CD14-positive monocyte (primary cell): ENCODE measurements at regions of chr19 and their contacts with region 1.

Region 1: GRCh38 chr19:10332955-10333757 is at the start of gene RAVER1:
- DNase-seq: peak; percentile 97 to 98 (median 98)
- H3K4me3 ChIP-seq: peak within 1 kb of the TSS; percentile 76 to 96 (median 87)
- H3K4me3 Mint-ChIP-seq: peak within 1 kb of the TSS; percentile 94
- H3K27ac ChIP-seq: peak within 1 kb of the TSS; percentile 74 to 85
- H3K27ac Mint-ChIP-seq: peak within 1 kb of the TSS; percentile 93 to 98 (median 96)
- H3K4me1 ChIP-seq: peaks cover 31 to 46% of the 10 kb centered on the region in 2 donors
- H3K4me1 Mint-ChIP-seq: peaks cover 33% of the 10 kb centered on the region
- H3K27me3 ChIP-seq: no peaks in the 10 kb centered on the region
- H3K27me3 Mint-ChIP-seq: no peaks in the 10 kb centered on the region
- CTCF ChIP-seq: no peak
- polyA plus RNA-seq, gene RAVER1: 6.0 to 20.7 (median 9.0) TPM

Region 2: GRCh38 chr19:10269333-10270179 is 63.6 kb before region 1 on chr19:
- intact Hi-C with region 1: loop called (anchors 5 kb)
- DNase-seq: peak; percentile 84 to 97 (median 85)
- H3K4me3 ChIP-seq: peak overlapping the region; percentile 75 to 96 (median 76)
- H3K4me3 Mint-ChIP-seq: peak overlapping the region; percentile 88 to 93
- H3K27ac ChIP-seq: peak overlapping the region; percentile 95 to 96
- H3K27ac Mint-ChIP-seq: peak overlapping the region; percentile 97 to 99 (median 98)
- H3K4me1 ChIP-seq: peaks cover 42 to 51% of the 10 kb centered on the region in 2 donors
- H3K4me1 Mint-ChIP-seq: peaks cover 38% of the 10 kb centered on the region
- H3K27me3 ChIP-seq: no peaks in the 10 kb centered on the region
- H3K27me3 Mint-ChIP-seq: peaks cover 2 to 4% (median 3%) of the 10 kb centered on the region in 3 donors
- CTCF ChIP-seq: peak; percentile 98

Region 3: GRCh38 chr19:10346509-10346908 is 13.4 kb after region 1 on chr19:
- intact Hi-C with region 1: loop called in 1 of 2 experiments (anchors 2 kb)
- DNase-seq: peak; percentile 87 to 92 (median 91)
- H3K4me3 ChIP-seq: peak overlapping the region in 1 of 3 experiments; percentile 48
- H3K4me3 Mint-ChIP-seq: peak overlapping the region; percentile 53 to 67
- H3K27ac ChIP-seq: peak overlapping the region; percentile 93 to 96
- H3K27ac Mint-ChIP-seq: peak overlapping the region; percentile 97 to 99 (median 99)
- H3K4me1 ChIP-seq: peaks cover 28 to 32% of the 10 kb centered on the region in 2 donors
- H3K4me1 Mint-ChIP-seq: peaks cover 23% of the 10 kb centered on the region
- H3K27me3 ChIP-seq: no peaks in the 10 kb centered on the region
- H3K27me3 Mint-ChIP-seq: peaks cover 0 to 2% (median 1%) of the 10 kb centered on the region in 3 donors
- CTCF ChIP-seq: no peak

Region 4: DNA sequence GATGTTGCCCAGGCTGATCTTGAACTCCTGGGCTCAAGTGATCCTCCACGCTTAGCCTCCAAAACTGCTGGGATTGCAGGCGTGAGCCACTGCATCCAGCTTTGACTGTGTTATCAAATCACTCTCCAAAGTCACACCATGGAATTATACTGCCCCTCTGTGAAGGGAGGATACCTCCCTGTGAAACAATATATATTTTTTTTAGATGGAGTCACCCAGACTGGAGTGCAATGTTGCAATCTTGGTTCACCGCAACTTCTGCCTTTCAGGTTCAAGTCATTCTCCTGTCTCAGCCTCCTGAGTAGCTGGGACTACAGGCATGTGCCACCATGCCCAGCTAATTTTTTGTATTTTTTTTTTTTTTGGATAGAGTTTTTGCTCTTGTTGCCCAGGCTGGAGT is 39.5 kb after region 1 on chr19:
- intact Hi-C with region 1: loop called (anchors 5 kb)
- DNase-seq: peak; percentile 87 to 93 (median 92)
- H3K4me3 ChIP-seq: peak overlapping the region in 1 of 3 experiments; percentile 29
- H3K4me3 Mint-ChIP-seq: peak overlapping the region; percentile 39 to 65
- H3K27ac ChIP-seq: peak overlapping the region; percentile 85 to 88
- H3K27ac Mint-ChIP-seq: peak overlapping the region; percentile 96 to 99 (median 97)
- H3K4me1 ChIP-seq: peaks cover 33 to 39% of the 10 kb centered on the region in 2 donors
- H3K4me1 Mint-ChIP-seq: peaks cover 35% of the 10 kb centered on the region
- H3K27me3 ChIP-seq: no peaks in the 10 kb centered on the region
- H3K27me3 Mint-ChIP-seq: no peaks in the 10 kb centered on the region
- CTCF ChIP-seq: no peak

Region 5: GRCh38 chr19:10388957-10389356 is 55.8 kb after region 1 on chr19:
- intact Hi-C with region 1: loop called in 1 of 2 experiments (anchors 5 kb)
- DNase-seq: peak; percentile 73 to 85 (median 83)
- H3K4me3 ChIP-seq: no peak overlapping the region
- H3K4me3 Mint-ChIP-seq: no peak overlapping the region
- H3K27ac ChIP-seq: no peak overlapping the region
- H3K27ac Mint-ChIP-seq: peak overlapping the region in 4 of 7 donors; percentile 18 to 75 (median 60)
- H3K4me1 ChIP-seq: peaks cover 0 to 6% of the 10 kb centered on the region in 2 donors
- H3K4me1 Mint-ChIP-seq: peaks cover 5% of the 10 kb centered on the region
- H3K27me3 ChIP-seq: no peaks in the 10 kb centered on the region
- H3K27me3 Mint-ChIP-seq: peaks cover 0 to 9% (median 0%) of the 10 kb centered on the region in 3 donors
- CTCF ChIP-seq: peak; percentile 97

Region 6: GRCh38 chr19:10612491-10613119 is 279.4 kb after region 1 on chr19:
- intact Hi-C with region 1: no loop called
- DNase-seq: no peak
- H3K4me3 ChIP-seq: no peak overlapping the region
- H3K4me3 Mint-ChIP-seq: no peak overlapping the region
- H3K27ac ChIP-seq: no peak overlapping the region
- H3K27ac Mint-ChIP-seq: no peak overlapping the region
- H3K4me1 ChIP-seq: peaks cover 10 to 18% of the 10 kb centered on the region in 2 donors
- H3K4me1 Mint-ChIP-seq: peaks cover 24% of the 10 kb centered on the region
- H3K27me3 ChIP-seq: no peaks in the 10 kb centered on the region
- H3K27me3 Mint-ChIP-seq: peaks cover 0 to 3% (median 3%) of the 10 kb centered on the region in 3 donors
- CTCF ChIP-seq: no peak